ENCODE measurements at regions of chr15 and their contacts with region 1.

Region 1: GRCh38 chr15:40338041-40338657 is 2.6 kb downstream of the CCDC9B start:
- DNase-seq: peak; percentile 83
- ATAC-seq: peak; percentile 87
- H3K4me3 Mint-ChIP-seq: no peak overlapping the region
- H3K27ac Mint-ChIP-seq: no peak overlapping the region
- H3K4me1 Mint-ChIP-seq: peaks cover 24% of the 10 kb centered on the region
- H3K27me3 Mint-ChIP-seq: no peaks in the 10 kb centered on the region

Region 2: DNA sequence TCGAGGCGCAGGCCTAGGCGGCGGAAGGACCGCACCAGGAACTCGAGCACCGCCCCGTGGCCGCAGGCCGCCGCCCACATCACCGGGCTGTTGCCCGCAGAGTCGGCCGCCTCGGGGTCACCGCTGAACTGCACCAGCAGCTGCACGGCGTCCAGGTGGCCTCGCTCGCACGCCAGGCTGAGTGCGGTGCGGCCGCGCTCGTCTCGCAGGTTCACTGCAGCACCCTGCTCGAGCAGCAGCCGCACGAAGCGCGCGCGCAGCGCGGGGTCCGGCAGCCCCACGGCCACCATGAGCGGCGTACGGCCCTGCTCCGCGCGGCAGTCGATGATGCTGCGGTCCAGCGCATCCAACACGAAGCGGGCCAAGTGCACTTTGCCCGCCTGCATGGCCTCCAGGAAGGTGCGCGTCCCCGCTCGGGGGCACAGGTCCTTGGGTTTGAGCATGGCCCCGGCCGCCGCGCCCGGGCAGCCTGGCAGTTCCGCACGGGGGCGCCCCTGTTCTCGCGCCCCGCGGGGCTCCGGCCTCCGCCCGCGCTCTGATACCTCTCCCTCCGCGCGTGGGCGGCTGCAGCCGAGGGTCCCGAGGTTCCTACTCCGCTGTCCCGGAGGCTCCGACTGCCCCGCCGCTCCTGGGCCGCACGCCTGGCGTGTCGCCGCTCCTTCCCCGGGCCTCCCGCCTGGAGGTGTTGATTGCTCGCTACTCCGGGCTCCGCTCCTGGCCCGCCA is 55.8 kb before region 1 on chr15:
- CTCF ChIA-PET with region 1: interaction called, 101 read pairs
- POLR2A ChIA-PET with region 1: interaction called, 4 read pairs
- DNase-seq: peak; percentile 62
- ATAC-seq: peak; percentile 73
- H3K4me3 Mint-ChIP-seq: peak overlapping the region; percentile 61
- H3K27ac Mint-ChIP-seq: no peak overlapping the region
- H3K4me1 Mint-ChIP-seq: peaks cover 9% of the 10 kb centered on the region
- H3K27me3 Mint-ChIP-seq: peaks cover 46% of the 10 kb centered on the region

Region 3: GRCh38 chr15:40323239-40323952 is 14.8 kb before region 1 on chr15 and contains the start of gene INAFM2:
- CTCF ChIA-PET with region 1: interaction called, 326 read pairs
- POLR2A ChIA-PET with region 1: interaction called, 5 read pairs
- DNase-seq: peak; percentile 95
- ATAC-seq: peak; percentile 91
- H3K4me3 Mint-ChIP-seq: peak within 1 kb of the TSS; percentile 73
- H3K27ac Mint-ChIP-seq: no peak within 1 kb of the TSS
- H3K4me1 Mint-ChIP-seq: peaks cover 31% of the 10 kb centered on the region
- H3K27me3 Mint-ChIP-seq: peaks cover 8% of the 10 kb centered on the region
- total RNA-seq, gene INAFM2: 8.7 to 9.4 TPM

Region 4: DNA sequence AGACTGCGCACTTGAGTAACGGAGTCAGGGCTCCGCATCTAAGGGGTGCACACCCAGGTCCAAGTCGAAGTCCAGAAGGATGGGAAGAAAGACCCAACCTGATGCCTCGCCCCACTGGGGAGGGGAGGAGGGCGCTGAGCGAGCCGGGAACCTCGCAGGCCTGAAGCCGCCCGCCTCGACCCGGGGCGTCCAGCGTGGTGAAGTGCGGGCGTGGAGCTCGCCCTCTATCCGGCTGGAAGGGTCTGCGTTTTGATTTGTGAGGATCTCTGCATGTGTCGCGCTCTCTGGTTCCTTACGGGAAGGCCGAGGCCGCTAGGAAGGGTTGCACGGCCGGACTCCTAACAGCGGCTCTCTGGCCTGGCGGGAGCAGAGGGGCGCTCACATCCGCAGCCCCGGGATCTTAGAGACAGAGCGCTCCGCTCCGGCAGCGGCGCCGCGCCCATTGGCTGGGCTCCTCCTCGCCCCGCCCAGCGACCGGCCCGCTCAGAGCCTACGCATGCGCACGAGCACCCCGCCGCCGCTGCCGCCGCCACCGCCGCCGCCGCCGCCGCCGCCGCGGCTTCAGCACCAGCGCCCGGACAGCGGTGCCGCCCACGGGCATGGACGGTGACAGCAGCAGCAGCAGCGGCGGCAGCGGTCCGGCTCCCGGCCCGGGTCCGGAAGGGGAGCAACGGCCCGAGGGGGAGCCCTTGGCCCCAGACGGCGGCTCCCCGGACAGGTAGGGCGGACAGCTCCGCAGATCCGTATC is 19.7 kb after region 1 on chr15 and contains the start of gene DISP2:
- CTCF ChIA-PET with region 1: interaction called, 32 read pairs
- POLR2A ChIA-PET with region 1: no interaction called
- DNase-seq: peak; percentile 90
- ATAC-seq: peak; percentile 95
- H3K4me3 Mint-ChIP-seq: peak within 1 kb of the TSS; percentile 78
- H3K27ac Mint-ChIP-seq: no peak within 1 kb of the TSS
- H3K4me1 Mint-ChIP-seq: peaks cover 12% of the 10 kb centered on the region
- H3K27me3 Mint-ChIP-seq: peaks cover 11% of the 10 kb centered on the region
- total RNA-seq, gene DISP2: 0.82 to 2.6 TPM

Region 5: DNA sequence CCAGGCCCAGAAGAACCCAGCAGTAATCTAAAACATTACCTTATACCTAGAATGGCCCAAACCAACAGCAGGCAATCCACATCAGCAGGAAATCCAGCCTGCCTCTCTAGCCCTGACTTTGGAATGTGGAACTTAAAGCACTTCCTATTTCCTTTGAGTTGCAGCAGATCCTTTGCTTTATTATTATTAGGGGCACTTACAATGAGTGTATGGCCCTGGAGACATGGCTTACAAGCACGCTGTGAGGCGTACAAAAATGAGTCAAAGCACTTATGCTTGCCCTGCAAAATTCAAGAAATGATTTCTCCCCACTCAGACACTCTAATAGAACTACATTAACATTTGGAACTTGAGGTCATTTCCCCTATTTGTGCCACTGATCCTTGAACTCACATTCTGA is 34.8 kb after region 1 on chr15:
- CTCF ChIA-PET with region 1: interaction called, 51 read pairs
- POLR2A ChIA-PET with region 1: no interaction called
- DNase-seq: no peak
- ATAC-seq: no peak
- H3K4me3 Mint-ChIP-seq: no peak overlapping the region
- H3K27ac Mint-ChIP-seq: no peak overlapping the region
- H3K4me1 Mint-ChIP-seq: peaks cover 8% of the 10 kb centered on the region
- H3K27me3 Mint-ChIP-seq: peaks cover 15% of the 10 kb centered on the region

Region 6: DNA sequence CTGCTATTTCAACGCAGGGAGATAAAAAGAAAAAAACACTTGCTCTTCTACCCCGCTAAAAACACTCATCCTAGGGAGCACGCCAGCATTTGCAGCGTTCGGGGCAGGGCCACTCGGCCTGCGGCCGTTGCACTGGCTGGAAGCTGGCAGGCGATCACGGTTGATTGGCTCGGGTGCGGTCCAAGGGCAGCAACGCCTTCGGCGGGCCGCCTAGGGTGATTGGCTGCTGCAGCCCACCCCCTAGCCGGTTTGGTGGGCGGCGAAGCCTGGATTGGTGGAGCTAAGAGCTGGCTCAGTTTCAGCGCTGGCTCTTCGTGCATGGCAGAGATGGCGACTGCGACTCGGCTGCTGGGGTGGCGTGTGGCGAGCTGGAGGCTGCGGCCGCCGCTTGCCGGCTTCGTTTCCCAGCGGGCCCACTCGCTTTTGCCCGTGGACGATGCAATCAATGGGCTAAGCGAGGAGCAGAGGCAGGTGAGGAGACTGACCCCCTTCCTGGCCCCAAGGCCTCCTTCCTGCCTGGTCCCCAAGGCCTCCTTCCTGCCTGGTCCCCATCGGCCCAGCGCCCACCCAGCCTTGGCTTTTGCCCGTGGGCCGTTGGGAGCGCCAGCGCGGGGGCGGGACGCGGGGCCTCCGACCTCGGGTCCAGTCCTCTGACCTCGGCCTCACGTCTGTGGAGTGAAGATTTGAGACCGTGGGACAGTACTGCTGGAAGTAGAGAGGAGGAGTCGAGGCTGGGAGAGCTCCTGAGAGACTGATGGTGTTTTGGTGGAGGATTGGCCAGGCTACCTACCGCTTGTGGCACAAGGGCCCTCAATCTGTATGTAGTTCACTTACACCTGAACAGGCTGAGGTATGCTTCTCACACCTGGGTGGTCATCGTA is 67.6 kb after region 1 on chr15 and contains the start of gene IVD:
- CTCF ChIA-PET with region 1: interaction called, 21 read pairs
- POLR2A ChIA-PET with region 1: no interaction called
- DNase-seq: peak; percentile 95
- ATAC-seq: peak; percentile 100
- H3K4me3 Mint-ChIP-seq: peak within 1 kb of the TSS; percentile 86
- H3K27ac Mint-ChIP-seq: peak within 1 kb of the TSS; percentile 95
- H3K4me1 Mint-ChIP-seq: peaks cover 45% of the 10 kb centered on the region
- H3K27me3 Mint-ChIP-seq: no peaks in the 10 kb centered on the region
- total RNA-seq, gene IVD: 77.7 to 79.9 TPM

Region 7: DNA sequence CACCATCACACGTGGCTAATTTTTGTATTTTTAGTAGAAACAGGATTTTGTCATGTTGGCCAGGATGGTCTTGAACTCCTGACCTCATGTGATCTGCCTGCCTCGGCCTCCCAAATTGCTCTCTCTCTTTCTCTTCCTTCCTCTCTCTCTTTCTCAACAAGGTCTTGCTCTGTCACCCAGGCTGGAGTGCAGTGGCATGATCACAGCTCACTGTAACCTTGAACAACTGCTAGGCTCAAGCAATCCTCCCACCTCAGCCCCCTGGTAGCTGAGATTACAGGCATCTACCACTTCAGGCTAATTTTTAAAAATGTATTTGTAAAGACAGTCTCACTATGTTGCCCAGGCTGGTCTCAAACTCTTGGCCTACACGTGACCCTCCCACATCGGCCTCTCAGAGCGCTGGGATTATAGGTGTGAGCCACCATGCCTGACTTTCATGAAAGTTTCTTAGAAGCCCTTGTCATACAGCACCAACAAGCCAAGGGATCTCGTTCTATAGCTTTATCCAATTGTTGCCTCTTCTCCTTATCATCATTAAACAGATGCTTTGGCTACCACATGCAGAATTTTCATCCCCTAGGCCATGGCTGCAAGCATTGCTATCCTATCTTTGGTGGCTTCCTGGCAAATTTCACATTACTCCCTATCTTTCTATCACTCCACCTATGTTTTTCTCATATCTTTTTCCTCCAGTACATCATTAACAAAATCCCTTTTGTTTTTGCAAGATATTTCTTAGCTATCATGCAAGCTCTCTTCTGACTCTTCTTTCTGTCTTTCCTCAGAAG is 221.0 kb after region 1 on chr15:
- CTCF ChIA-PET with region 1: no interaction called
- POLR2A ChIA-PET with region 1: no interaction called
- DNase-seq: no peak
- ATAC-seq: no peak
- H3K4me3 Mint-ChIP-seq: no peak overlapping the region
- H3K27ac Mint-ChIP-seq: no peak overlapping the region
- H3K4me1 Mint-ChIP-seq: peaks cover 14% of the 10 kb centered on the region
- H3K27me3 Mint-ChIP-seq: no peaks in the 10 kb centered on the region

Measured in activated CD8-positive, alpha-beta T cell treated with anti-CD3 and anti-CD28 coated beads, Interleukin-2, amount 10 ng/mL, durations not matched to agents 7 days and 5 days (primary cell).